ENCODE measurements at regions of chr19 and their contacts with region 1.

Region 1: DNA sequence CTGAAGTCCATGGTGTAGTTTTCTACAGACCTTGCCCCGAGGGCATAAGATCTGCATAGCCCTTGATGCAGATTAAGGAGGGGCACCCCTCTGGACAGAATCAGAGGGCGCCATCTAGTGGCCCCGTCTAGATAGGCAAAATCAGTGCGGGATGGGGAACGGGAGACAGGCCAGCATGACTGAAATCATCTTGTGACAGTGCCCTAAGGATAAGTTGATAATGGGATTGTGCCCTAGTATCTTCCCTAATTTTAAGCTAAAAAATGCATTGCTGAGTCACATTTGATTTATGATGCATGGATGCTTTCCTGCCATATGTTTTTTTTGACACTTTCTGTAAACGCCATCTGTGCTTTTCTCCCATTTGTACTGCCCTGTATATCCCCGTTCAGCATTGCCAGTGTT is 19.0 kb upstream of the GPI start:
- DNase-seq: peak in 5 of 6 donors; percentile 44 to 87 (median 64)
- ATAC-seq: peak; percentile 71 to 95 (median 90)
- H3K4me3 ChIP-seq: no peak overlapping the region
- H3K27ac ChIP-seq: no peak overlapping the region
- H3K4me1 ChIP-seq: peaks cover 0 to 4% (median 0%) of the 10 kb centered on the region in 3 donors
- H3K27me3 ChIP-seq: no peaks in the 10 kb centered on the region
- CTCF ChIP-seq: peak; percentile 66 to 85 (median 78)

Region 2: DNA sequence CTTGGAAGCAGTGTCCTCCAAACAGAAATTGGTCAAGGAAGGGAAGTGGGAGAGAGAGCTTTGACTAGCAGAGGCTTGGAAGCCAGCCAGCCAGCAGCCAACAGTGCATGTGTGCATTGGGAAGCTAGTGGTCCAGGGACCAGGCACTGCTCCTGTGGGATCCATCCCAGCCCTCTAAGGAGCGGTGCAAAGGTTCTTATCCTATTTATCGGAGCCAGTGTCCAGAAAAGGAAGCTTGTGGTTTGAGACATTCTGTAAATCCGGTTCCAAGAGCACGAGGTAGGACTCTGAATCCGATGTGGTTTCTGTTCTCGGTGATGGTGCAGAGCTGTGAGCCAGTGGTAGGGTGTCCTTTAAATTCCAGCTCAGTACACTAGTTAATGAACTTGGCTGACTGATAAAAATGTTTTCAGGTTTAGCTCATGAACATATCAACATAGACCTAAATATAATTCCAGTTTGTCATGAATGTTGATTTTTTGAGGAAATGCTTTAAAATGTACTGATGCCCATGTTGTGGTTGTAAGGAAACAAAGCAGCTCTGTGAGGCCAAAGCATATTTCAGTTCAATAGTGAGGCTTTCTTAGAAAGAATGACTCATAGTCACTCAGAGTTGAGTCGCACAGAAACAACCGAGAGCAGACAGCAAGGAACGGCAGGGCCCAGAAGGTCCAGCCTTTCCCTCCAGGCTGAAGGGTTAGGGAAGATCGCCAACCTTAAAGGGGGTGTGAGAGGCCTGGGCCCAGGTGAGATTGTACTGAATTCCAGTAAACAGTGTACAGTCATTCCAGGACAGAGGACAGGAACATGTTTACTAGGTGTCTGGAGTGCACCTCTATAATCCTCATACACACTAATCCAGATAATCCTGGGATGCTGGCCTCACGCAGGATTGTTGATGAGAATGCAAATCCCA is 113.1 kb before region 1 on chr19:
- intact Hi-C with region 1: loop called in 2 of 3 experiments (anchors 10 kb)
- DNase-seq: peak in 3 of 6 donors; percentile 40 to 65 (median 54)
- ATAC-seq: peak; percentile 61 to 84 (median 72)
- H3K4me3 ChIP-seq: no peak overlapping the region
- H3K27ac ChIP-seq: peak overlapping the region in 2 of 4 donors; percentile 39 to 59
- H3K4me1 ChIP-seq: peaks cover 0 to 6% (median 0%) of the 10 kb centered on the region in 3 donors
- H3K27me3 ChIP-seq: no peaks in the 10 kb centered on the region
- CTCF ChIP-seq: no peak

Region 3: DNA sequence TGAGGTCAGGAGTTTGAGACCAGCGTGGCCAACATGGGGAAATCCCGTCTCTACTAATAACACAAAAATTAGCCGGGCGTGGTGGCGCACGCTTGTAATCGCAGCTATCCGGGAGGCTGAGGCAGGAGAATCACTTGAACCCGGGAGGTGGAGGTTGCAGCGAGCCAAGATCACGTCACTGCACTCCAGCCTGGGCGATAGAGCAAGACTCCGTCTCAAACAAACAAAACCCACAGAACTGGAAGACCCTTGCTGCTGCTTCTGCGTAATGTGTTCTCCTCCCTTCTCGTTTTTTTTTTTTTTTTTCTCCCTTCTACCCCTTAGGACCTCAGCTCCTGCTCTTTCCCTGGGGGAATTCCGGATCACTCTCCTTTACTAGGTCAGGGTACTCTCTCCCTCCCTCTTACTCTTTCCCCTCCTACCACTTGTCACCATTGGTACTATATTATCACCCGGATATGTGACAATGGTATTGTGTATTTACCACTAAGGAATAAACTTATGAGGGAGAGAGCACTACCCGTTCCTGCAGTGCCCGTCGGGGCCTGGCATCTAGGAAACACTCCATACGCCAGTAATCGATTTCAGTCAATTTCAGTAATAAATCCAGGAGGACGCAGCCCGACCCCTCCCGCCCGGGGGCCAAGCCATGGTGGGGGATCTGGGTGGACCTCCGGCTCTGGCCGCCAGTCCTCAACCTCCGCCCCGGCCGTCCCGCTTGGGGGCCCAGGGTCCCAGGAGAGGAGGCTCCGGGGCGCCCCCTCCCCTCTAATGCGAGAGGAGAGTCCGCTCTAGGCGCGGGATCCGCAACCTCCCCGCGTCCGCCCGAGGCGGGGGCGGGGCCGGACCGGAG is 92.0 kb before region 1 on chr19:
- intact Hi-C with region 1: no loop called
- DNase-seq: peak; percentile 85 to 97 (median 90)
- ATAC-seq: peak; percentile 87 to 96 (median 92)
- H3K4me3 ChIP-seq: peak overlapping the region; percentile 74 to 94 (median 84)
- H3K27ac ChIP-seq: peak overlapping the region; percentile 89 to 98 (median 96)
- H3K4me1 ChIP-seq: peaks cover 6 to 16% (median 14%) of the 10 kb centered on the region in 3 donors
- H3K27me3 ChIP-seq: no peaks in the 10 kb centered on the region
- CTCF ChIP-seq: no peak